PC-9 (cell line): ENCODE measurements at regions of chr3 and their contacts with region 1.

Region 1: DNA sequence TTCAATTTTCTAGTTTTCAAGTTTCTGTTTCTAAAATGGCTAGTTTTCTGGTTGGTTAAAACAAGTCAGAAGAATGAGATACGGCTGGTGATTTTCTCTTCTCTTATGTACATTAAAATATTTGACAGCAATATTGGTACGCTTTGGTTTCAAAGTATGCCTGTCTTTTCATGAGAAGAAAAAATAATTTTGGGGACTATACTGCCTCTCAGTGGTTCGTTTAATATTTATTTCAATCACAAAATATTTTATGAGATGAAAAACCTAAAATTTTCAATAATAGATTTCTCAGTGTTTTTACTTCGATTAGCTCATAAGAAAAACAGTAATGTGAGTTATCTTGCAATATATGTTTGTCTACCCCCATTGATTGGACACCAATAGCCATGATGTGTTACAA is 72.8 kb upstream of the AADACL2 start:
- DNase-seq: no peak
- H3K4me3 ChIP-seq: no peak overlapping the region
- H3K27ac ChIP-seq: no peak overlapping the region
- H3K4me1 ChIP-seq: no peaks in the 10 kb centered on the region
- H3K27me3 ChIP-seq: no peaks in the 10 kb centered on the region
- CTCF ChIP-seq: peak; percentile 59

Region 2: GRCh38 chr3:151468284-151468917 is 192.5 kb before region 1 on chr3:
- CTCF ChIA-PET with region 1: no interaction called
- POLR2A ChIA-PET with region 1: no interaction called
- intact Hi-C with region 1: loop called (anchors 10 kb)
- DNase-seq: peak; percentile 40 to 43
- H3K4me3 ChIP-seq: no peak overlapping the region
- H3K27ac ChIP-seq: no peak overlapping the region
- H3K4me1 ChIP-seq: no peaks in the 10 kb centered on the region
- H3K27me3 ChIP-seq: no peaks in the 10 kb centered on the region
- CTCF ChIP-seq: peak; percentile 96